T-cell (primary cell): ENCODE measurements at regions of chr17 and their contacts with region 1.

Region 1: DNA sequence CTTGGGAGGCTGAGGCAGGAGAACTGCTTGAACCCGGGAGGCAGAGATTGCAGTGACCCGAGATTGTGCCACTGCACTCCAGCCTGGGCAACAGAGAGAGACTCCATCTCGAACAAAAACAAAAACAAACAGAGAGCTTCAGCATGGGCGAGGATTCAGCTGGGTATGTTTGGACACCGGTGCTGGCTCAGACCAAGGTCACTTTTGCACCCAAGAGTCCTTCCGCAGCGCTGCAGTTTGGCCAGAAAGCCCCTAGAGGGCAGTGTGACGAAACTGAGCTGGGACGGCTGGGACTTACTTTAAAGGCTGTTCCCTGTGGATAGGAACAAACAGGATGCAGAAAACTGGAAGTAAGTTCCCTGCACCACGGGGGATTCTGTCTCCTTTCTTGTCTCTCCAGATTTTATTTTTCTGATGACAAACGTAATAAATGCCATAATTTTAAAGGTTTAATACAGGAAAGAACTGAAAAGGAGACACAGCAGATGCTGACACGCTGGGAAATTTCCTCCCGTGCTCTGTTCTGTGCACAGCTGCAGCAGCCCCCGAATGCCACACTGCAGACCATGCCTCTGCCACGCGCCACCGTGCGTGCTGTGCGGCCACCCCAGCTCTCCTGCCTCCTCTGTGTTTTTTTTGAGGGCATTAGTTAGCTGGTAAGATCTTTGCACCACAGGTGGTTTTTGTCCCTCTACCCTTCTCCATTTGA is 25.2 kb upstream of the USP36 start:
- DNase-seq: peak in 27 of 35 experiments; percentile 10 to 75 (median 48)
- ATAC-seq: peak; percentile 65 to 76 (median 68)
- H3K4me3 ChIP-seq: no peak overlapping the region
- H3K4me3 Mint-ChIP-seq: no peak overlapping the region
- H3K27ac ChIP-seq: no peak overlapping the region
- H3K27ac Mint-ChIP-seq: peak overlapping the region in 1 of 2 donors; percentile 52
- H3K4me1 ChIP-seq: peaks cover 0 to 5% of the 10 kb centered on the region in 2 experiments
- H3K4me1 Mint-ChIP-seq: peaks cover 0 to 4% (median 3%) of the 10 kb centered on the region in 3 donors
- H3K27me3 ChIP-seq: peaks cover 0 to 16% of the 10 kb centered on the region in 2 experiments
- H3K27me3 Mint-ChIP-seq: peaks cover 0 to 2% of the 10 kb centered on the region in 2 donors

Region 2: DNA sequence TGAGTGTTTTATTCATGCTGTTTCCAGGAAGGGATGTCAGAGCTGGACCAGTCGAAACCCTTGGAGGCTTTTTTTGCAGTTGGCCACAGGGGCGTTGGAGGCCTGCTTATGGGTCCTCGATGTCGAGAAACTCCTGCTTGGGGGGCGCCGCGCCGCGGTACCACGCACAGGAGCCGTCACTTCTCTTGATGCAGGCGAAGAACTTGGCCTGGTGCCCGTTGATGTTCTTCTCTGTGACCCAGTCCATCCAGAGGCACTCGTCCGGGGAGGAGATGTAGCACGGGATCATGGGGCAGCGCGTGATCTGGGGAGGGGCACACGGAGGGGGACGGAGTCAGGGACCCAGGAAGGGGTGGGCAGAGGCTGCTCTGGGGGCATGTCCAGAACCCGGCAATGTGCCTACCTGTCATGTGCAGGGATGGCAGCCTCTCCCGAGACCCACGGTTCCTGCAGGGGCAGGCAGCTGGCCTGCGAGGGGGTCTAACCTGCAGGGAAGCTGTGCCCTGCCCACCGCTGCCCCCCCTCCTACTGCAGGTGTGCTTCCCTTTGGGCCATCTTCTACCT is 10.2 kb before region 1 on chr17:
- CTCF ChIA-PET with region 1: interaction called in 1 of 2 experiments, 10 read pairs
- POLR2A ChIA-PET with region 1: no interaction called
- DNase-seq: no peak
- ATAC-seq: no peak
- H3K4me3 ChIP-seq: no peak overlapping the region
- H3K4me3 Mint-ChIP-seq: no peak overlapping the region
- H3K27ac ChIP-seq: no peak overlapping the region
- H3K27ac Mint-ChIP-seq: no peak overlapping the region
- H3K4me1 ChIP-seq: no peaks in the 10 kb centered on the region
- H3K4me1 Mint-ChIP-seq: no peaks in the 10 kb centered on the region
- H3K27me3 ChIP-seq: peaks cover 0 to 13% of the 10 kb centered on the region in 2 experiments
- H3K27me3 Mint-ChIP-seq: no peaks in the 10 kb centered on the region

Region 3: GRCh38 chr17:78970834-78971773 is 105.3 kb after region 1 on chr17:
- CTCF ChIA-PET with region 1: interaction called, 4 to 12 read pairs
- POLR2A ChIA-PET with region 1: no interaction called
- DNase-seq: peak; percentile 40 to 88 (median 72)
- ATAC-seq: peak; percentile 63 to 83 (median 72)
- H3K4me3 ChIP-seq: no peak overlapping the region
- H3K4me3 Mint-ChIP-seq: no peak overlapping the region
- H3K27ac ChIP-seq: no peak overlapping the region
- H3K27ac Mint-ChIP-seq: peak overlapping the region; percentile 62 to 72
- H3K4me1 ChIP-seq: peaks cover 0 to 12% of the 10 kb centered on the region in 2 experiments
- H3K4me1 Mint-ChIP-seq: peaks cover 12 to 17% (median 14%) of the 10 kb centered on the region in 3 donors
- H3K27me3 ChIP-seq: peaks cover 0 to 15% of the 10 kb centered on the region in 2 experiments
- H3K27me3 Mint-ChIP-seq: no peaks in the 10 kb centered on the region